Right ventricle myocardium inferior (tissue), 1 donor: ENCODE measurements at regions of chr12 and their contacts with region 1.

Region 1: GRCh38 chr12:124359671-124360581 is 65.0 kb downstream of the RFLNA start:
- DNase-seq: peak; percentile 95
- ATAC-seq: peak; percentile 93

Region 2: GRCh38 chr12:124433147-124433874 is 73.4 kb after region 1 on chr12:
- intact Hi-C with region 1: loop called (anchors 5 kb)
- DNase-seq: no peak
- ATAC-seq: peak; percentile 81

Region 3: DNA sequence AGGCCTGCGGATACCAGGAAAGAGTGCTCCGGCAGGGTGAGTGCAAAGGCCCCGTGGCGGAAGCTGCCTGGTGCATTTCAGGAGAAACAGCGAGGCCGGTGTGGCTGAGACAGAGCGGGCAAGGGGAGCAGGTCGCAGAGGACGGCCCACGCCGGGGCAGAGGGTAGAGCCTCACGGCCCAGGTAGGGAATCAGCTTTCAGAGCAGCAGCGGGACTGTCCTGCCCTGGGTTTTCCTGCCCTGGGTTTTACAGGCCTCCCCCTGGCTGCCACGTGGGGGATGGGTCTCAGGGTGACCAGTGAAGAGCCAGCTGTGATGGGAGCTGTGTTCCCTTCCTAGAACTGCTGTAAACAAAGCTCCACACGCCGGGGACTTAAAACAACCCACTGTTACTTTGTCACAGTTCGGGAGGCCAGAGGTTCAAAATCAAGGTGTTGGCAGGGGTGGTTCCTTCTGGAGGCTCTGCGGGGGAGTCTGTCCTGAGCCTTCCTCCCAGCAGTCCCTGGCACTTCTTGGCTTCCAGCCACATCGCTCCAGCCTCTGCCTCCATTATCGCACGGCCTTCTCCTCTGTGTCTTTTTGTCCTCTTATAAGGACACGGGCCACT is 197.1 kb after region 1 on chr12:
- intact Hi-C with region 1: no loop called
- DNase-seq: peak; percentile 65
- ATAC-seq: no peak